Transverse colon (tissue), 4 donors: ENCODE measurements at regions of chr16 and their contacts with region 1.

Region 1: DNA sequence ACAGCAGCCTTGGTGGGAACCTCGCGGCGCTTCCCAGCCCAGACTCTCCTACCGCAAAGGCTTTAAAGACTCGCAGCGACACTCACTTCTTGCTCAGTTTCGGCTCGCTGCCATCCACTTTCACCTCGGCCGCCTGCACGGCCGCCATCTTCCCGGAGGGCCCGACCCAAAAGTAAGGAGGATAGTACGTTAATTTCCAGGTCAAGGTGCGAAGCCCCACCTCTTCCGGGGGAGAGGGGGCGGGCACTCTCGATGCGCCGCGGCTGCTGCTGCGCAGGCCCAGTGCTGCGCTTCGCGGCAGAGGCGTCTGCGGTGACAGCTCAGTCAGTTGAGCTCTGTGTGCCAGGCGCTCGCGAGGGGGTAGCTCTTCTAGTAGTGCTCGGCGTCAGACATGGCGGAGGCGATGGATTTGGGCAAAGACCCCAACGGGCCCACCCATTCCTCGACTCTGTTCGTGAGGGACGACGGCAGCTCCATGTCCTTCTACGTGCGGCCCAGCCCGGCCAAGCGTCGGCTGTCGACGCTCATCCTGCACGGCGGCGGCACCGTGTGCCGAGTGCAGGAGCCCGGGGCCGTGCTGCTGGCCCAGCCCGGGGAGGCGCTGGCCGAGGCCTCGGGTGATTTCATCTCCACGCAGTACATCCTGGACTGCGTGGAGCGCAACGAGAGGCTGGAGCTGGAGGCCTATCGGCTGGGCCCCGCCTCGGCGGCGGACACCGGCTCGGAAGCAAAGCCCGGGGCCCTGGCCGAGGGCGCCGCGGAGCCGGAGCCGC is at the starts of genes KARS1 and TERF2IP:
- DNase-seq: peak; percentile 96
- H3K4me3 ChIP-seq: peak within 1 kb of the TSS; percentile 86 to 100 (median 97)
- H3K27ac ChIP-seq: peak within 1 kb of the TSS; percentile 97 to 99 (median 98)
- H3K4me1 ChIP-seq: peaks cover 25 to 58% (median 41%) of the 10 kb centered on the region in 4 donors
- H3K27me3 ChIP-seq: no peaks in the 10 kb centered on the region
- CTCF ChIP-seq: peak in 1 of 5 experiments; percentile 3
- EP300 ChIP-seq: no peak
- POLR2A ChIP-seq: peak; percentile 98
- total RNA-seq, gene KARS1: 15.3 to 86.5 (median 76.4) TPM
- total RNA-seq, gene TERF2IP: 20.9 to 50.0 (median 36.3) TPM

Region 2: GRCh38 chr16:75432828-75433731 is 214.6 kb before region 1 on chr16 and contains the start of gene CFDP1:
- in situ Hi-C with region 1: no loop called
- intact Hi-C with region 1: loop called (anchors 5 kb)
- DNase-seq: peak; percentile 96
- H3K4me3 ChIP-seq: peak within 1 kb of the TSS; percentile 65 to 96 (median 75)
- H3K27ac ChIP-seq: peak within 1 kb of the TSS; percentile 94 to 98 (median 96)
- H3K4me1 ChIP-seq: peaks cover 0 to 29% (median 12%) of the 10 kb centered on the region in 4 donors
- H3K27me3 ChIP-seq: no peaks in the 10 kb centered on the region
- CTCF ChIP-seq: no peak
- EP300 ChIP-seq: no peak
- POLR2A ChIP-seq: peak; percentile 67
- total RNA-seq, gene CFDP1: 51.2 to 318 (median 145) TPM

Region 3: GRCh38 chr16:75464130-75464918 is 183.4 kb before region 1 on chr16 and contains the start of gene TMEM170A:
- in situ Hi-C with region 1: loop called in 2 of 4 experiments (anchors 25 kb)
- intact Hi-C with region 1: no loop called
- DNase-seq: peak; percentile 100
- H3K4me3 ChIP-seq: peak within 1 kb of the TSS; percentile 75 to 99 (median 84)
- H3K27ac ChIP-seq: peak within 1 kb of the TSS; percentile 91 to 97 (median 96)
- H3K4me1 ChIP-seq: peaks cover 9 to 39% (median 35%) of the 10 kb centered on the region in 4 donors
- H3K27me3 ChIP-seq: no peaks in the 10 kb centered on the region
- CTCF ChIP-seq: peak; percentile 100
- EP300 ChIP-seq: no peak
- POLR2A ChIP-seq: peak; percentile 98
- total RNA-seq, gene TMEM170A: 16.5 to 96.7 (median 49.2) TPM

Region 4: GRCh38 chr16:77190478-77191258 is 1543.0 kb after region 1 on chr16 and contains the start of gene MON1B:
- in situ Hi-C with region 1: loop called in 1 of 4 experiments (anchors 25 kb)
- intact Hi-C with region 1: no loop called
- DNase-seq: peak; percentile 97
- H3K4me3 ChIP-seq: peak within 1 kb of the TSS; percentile 54 to 95 (median 69)
- H3K27ac ChIP-seq: peak within 1 kb of the TSS; percentile 94 to 97 (median 96)
- H3K4me1 ChIP-seq: peaks cover 6 to 15% (median 11%) of the 10 kb centered on the region in 4 donors
- H3K27me3 ChIP-seq: no peaks in the 10 kb centered on the region
- CTCF ChIP-seq: no peak
- EP300 ChIP-seq: no peak
- POLR2A ChIP-seq: peak; percentile 86
- total RNA-seq, gene MON1B: 35.6 to 119 (median 55.9) TPM